ENCODE measurements at regions of chr5 and their contacts with region 1.

Region 1: DNA sequence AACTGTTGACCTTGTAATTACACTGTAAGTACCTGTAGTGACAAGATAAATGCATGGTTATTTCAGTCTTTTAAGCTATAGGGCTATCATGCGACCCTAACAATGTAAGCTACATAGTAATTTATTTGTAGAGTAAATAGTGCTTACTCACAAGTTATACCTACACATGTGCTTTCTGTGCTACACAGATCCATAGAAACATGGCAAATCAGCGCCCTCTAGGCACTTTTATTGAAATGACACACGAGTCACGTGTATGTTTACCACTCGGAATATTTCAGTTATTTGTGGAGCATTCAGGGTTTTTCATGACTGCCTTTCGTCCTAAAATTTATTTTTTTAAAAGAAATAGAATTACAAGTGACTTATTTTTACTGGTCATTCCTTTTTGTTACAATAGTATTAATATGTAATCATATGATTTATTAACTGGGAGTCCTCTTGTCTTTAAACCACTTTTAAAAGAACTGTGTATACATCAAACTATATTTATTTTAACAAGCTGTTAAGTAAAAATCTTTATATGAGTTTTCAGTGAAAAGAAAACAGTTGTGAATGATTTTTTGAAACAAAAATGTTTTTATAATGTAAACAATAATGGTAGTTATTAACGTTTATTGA is 1242.3 kb upstream of the WWC1 start:
- DNase-seq: peak in 1 of 2 donors; percentile 29
- ATAC-seq: peak in 1 of 8 donors; percentile 46
- H3K4me3 ChIP-seq: no peak overlapping the region
- H3K27ac ChIP-seq: no peak overlapping the region
- H3K4me1 ChIP-seq: no peaks in the 10 kb centered on the region
- H3K27me3 ChIP-seq: peaks cover 0 to 4% (median 0%) of the 10 kb centered on the region in 7 donors
- CTCF ChIP-seq: peak in 8 of 9 donors; percentile 17 to 68 (median 58)

Region 2: GRCh38 chr5:165630261-165630778 is 1418.8 kb before region 1 on chr5:
- intact Hi-C with region 1: loop called in 2 of 10 experiments (anchors 10 kb)
- DNase-seq: peak in 1 of 2 donors; percentile 40
- ATAC-seq: peak in 6 of 8 donors; percentile 34 to 81 (median 54)
- H3K4me3 ChIP-seq: no peak overlapping the region
- H3K27ac ChIP-seq: no peak overlapping the region
- H3K4me1 ChIP-seq: no peaks in the 10 kb centered on the region
- H3K27me3 ChIP-seq: peaks cover 0 to 3% (median 0%) of the 10 kb centered on the region in 7 donors
- CTCF ChIP-seq: peak; percentile 38 to 79 (median 74)

Region 3: GRCh38 chr5:166708291-166708690 is 340.9 kb before region 1 on chr5:
- intact Hi-C with region 1: loop called in 1 of 10 experiments (anchors 5 kb)
- DNase-seq: no peak
- ATAC-seq: no peak
- H3K4me3 ChIP-seq: no peak overlapping the region
- H3K27ac ChIP-seq: no peak overlapping the region
- H3K4me1 ChIP-seq: peaks cover 0 to 5% (median 0%) of the 10 kb centered on the region in 9 donors
- H3K27me3 ChIP-seq: no peaks in the 10 kb centered on the region
- CTCF ChIP-seq: no peak